Ascending aorta (tissue), 2 donors: ENCODE measurements at regions of chr18 and their contacts with region 1.

Region 1: DNA sequence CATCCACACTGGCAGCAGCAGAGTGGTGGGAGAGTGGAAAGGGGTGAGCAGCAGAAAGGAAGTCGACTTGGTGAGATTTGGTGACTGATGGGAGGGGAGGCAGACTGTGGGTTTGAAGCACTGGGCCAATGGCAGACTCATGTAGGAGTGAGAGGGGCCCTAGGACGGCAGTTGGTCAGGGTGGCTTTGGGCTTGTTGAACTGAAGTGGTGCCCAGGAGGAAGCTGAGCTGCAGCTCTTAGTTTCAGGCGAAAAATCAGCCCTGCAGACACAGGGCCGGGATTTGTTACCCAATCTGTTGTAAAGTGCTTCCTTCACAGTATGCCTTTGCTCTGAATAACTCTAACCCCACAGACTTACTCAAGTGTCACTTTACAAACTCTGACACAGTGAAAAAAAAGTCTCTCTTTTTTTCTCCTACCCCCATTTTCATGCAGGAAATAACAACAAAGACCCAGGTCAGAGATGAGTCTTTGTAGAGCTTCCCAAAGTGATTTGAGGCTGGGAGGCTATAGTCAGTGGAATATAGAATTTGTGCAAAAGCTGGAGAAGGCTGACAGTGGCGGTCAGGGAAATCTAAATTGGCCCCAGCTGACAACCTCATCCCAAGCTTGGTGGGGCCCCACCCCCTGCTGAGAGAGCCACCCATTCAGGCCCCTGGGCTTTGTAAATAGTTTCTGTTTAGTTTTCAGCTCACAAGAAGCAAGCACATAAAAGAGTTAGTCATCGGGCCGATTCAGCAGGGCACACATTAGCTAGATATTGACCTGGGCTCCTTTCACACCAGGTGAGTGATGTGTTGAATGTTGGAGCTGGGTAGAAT is 226.9 kb downstream of the VAPA start:
- DNase-seq: no peak
- H3K4me3 ChIP-seq: no peak overlapping the region
- H3K27ac ChIP-seq: no peak overlapping the region
- H3K4me1 ChIP-seq: peaks cover 6 to 14% of the 10 kb centered on the region in 2 donors
- H3K27me3 ChIP-seq: no peaks in the 10 kb centered on the region
- CTCF ChIP-seq: no peak

Region 2: GRCh38 chr18:10006311-10006893 is 134.3 kb before region 1 on chr18:
- intact Hi-C with region 1: loop called (anchors 5 kb)
- DNase-seq: no peak
- H3K4me3 ChIP-seq: no peak overlapping the region
- H3K27ac ChIP-seq: peak overlapping the region in 1 of 2 donors; percentile 29
- H3K4me1 ChIP-seq: peaks cover 13 to 16% of the 10 kb centered on the region in 2 donors
- H3K27me3 ChIP-seq: no peaks in the 10 kb centered on the region
- CTCF ChIP-seq: peak in 2 of 3 experiments; percentile 31 to 55

Region 3: GRCh38 chr18:10213526-10213925 is 72.9 kb after region 1 on chr18:
- intact Hi-C with region 1: no loop called
- DNase-seq: no peak
- H3K4me3 ChIP-seq: no peak overlapping the region
- H3K27ac ChIP-seq: no peak overlapping the region
- H3K4me1 ChIP-seq: no peaks in the 10 kb centered on the region
- H3K27me3 ChIP-seq: no peaks in the 10 kb centered on the region
- CTCF ChIP-seq: no peak